B cell (primary cell): ENCODE measurements at regions of chr10 and their contacts with region 1.

Region 1: GRCh38 chr10:5854106-5854570 is 35.6 kb downstream of the ANKRD16 start:
- DNase-seq: no peak
- ATAC-seq: no peak
- H3K4me3 ChIP-seq: no peak overlapping the region
- H3K4me3 Mint-ChIP-seq: no peak overlapping the region
- H3K27ac ChIP-seq: no peak overlapping the region
- H3K27ac Mint-ChIP-seq: no peak overlapping the region
- H3K4me1 ChIP-seq: peaks cover 19 to 52% of the 10 kb centered on the region in 2 donors
- H3K4me1 Mint-ChIP-seq: peaks cover 37% of the 10 kb centered on the region
- H3K27me3 ChIP-seq: no peaks in the 10 kb centered on the region
- H3K27me3 Mint-ChIP-seq: no peaks in the 10 kb centered on the region
- CTCF ChIP-seq: no peak

Region 2: GRCh38 chr10:5589715-5590521 is 264.2 kb before region 1 on chr10:
- CTCF ChIA-PET with region 1: no interaction called
- POLR2A ChIA-PET with region 1: no interaction called
- intact Hi-C with region 1: no loop called
- DNase-seq: no peak
- ATAC-seq: no peak
- H3K4me3 ChIP-seq: no peak overlapping the region
- H3K4me3 Mint-ChIP-seq: no peak overlapping the region
- H3K27ac ChIP-seq: no peak overlapping the region
- H3K27ac Mint-ChIP-seq: no peak overlapping the region
- H3K4me1 ChIP-seq: peaks cover 0 to 6% of the 10 kb centered on the region in 2 donors
- H3K4me1 Mint-ChIP-seq: peaks cover 9% of the 10 kb centered on the region
- H3K27me3 ChIP-seq: peaks cover 0 to 16% (median 6%) of the 10 kb centered on the region in 4 experiments
- H3K27me3 Mint-ChIP-seq: peaks cover 45% of the 10 kb centered on the region
- CTCF ChIP-seq: no peak

Region 3: DNA sequence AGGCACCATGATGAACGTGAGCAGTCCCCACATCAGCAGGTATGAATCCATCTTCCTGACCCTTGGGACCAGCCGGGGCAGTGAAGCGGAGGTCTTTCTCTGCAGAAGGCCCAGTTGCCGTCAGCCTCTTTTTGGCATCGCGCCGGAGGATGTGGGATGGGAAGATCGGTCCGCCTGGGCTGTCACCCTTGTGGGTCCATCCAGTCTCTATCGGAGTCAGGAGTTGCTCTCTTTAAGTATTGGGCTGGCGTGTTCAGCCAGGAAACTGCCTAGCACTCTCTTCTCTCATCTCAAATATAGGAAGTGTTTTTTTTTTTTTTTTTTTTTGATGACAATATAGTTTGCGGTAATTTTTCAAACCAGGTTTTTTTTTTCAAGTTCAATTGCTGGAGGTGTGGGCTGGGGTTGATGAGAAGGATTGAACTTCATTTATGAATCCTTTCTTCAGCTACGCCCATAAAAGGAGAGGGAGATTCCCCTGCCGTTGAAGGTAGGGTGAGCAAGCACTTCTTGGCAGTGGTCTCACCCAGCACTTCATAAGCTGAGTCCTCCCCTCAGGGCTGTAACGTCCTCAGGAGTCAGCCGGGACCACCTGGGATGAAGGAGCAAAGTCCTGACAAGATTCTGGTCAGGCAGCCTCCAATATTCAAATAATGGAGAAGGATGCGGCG is 208.1 kb after region 1 on chr10 and contains the start of gene IL2RA:
- CTCF ChIA-PET with region 1: no interaction called
- POLR2A ChIA-PET with region 1: interaction called, 11 read pairs
- intact Hi-C with region 1: no loop called
- DNase-seq: peak; percentile 73
- ATAC-seq: peak; percentile 73
- H3K4me3 ChIP-seq: peak within 1 kb of the TSS in 4 of 5 experiments; percentile 51 to 62 (median 54)
- H3K4me3 Mint-ChIP-seq: peak within 1 kb of the TSS; percentile 97
- H3K27ac ChIP-seq: peak within 1 kb of the TSS; percentile 62 to 77
- H3K27ac Mint-ChIP-seq: peak within 1 kb of the TSS; percentile 97
- H3K4me1 ChIP-seq: peaks cover 30 to 45% of the 10 kb centered on the region in 2 donors
- H3K4me1 Mint-ChIP-seq: peaks cover 69% of the 10 kb centered on the region
- H3K27me3 ChIP-seq: no peaks in the 10 kb centered on the region
- H3K27me3 Mint-ChIP-seq: no peaks in the 10 kb centered on the region
- CTCF ChIP-seq: no peak
- total RNA-seq, gene IL2RA: 52.7 and 56.7 TPM in 2 replicates